ENCODE measurements at regions of chr15 and their contacts with region 1.

Region 1: DNA sequence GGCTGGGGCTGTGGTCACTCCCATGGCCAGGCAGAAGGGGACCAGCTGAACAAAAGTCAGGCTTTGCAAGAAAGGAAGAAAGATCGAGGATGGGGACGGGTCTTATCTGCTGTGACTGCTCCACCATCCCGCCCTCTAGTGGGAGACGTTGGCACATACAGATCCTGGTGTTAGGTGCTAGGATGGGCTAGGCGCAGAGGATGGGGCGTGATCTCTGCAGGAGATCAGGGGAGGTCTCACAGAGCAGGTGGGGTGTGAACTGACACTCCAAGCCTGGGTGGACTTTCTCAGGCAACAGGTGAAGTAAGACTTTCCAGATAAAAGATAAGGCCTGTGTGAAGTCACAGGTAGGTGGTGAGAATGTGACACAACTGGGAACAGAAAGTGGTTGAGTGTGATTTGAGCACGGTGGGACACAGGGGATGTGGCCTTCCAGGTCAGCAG is 141.9 kb upstream of the SMAD3 start:
- DNase-seq: peak; percentile 54
- H3K4me3 ChIP-seq: 0 out of 4 replicates have a peak overlapping the region, but pooled peaks of 1 of the 2 experiments have one; percentile 20
- H3K27ac ChIP-seq: no peak overlapping the region
- H3K4me1 ChIP-seq: no peaks in the 10 kb centered on the region; a peak in 1 of 4 replicates
- H3K27me3 ChIP-seq: no peaks in the 10 kb centered on the region
- CTCF ChIP-seq: peak; percentile 53
- EP300 ChIP-seq: no peak
- RAD21 ChIP-seq: peak; percentile 21; the same call in 1 of the 2 replicates

Region 2: GRCh38 chr15:66905185-66905584 is 18.3 kb before region 1 on chr15:
- CTCF ChIA-PET with region 1: interaction called, 14 read pairs
- POLR2A ChIA-PET with region 1: no interaction called
- DNase-seq: no peak
- H3K4me3 ChIP-seq: no peak overlapping the region
- H3K27ac ChIP-seq: no peak overlapping the region
- H3K4me1 ChIP-seq: peaks cover 4 to 5% of the 10 kb centered on the region in 2 experiments; a peak in 2 of 4 replicates
- H3K27me3 ChIP-seq: no peaks in the 10 kb centered on the region
- CTCF ChIP-seq: no peak
- EP300 ChIP-seq: no peak
- RAD21 ChIP-seq: no peak

Measured in SK-N-SH (cell line).